ENCODE measurements at regions of chr15 and their contacts with region 1.

Region 1: GRCh38 chr15:100879464-100880138 is at the start of gene ALDH1A3:
- DNase-seq: no peak
- H3K4me3 ChIP-seq: peak within 1 kb of the TSS; percentile 50
- CTCF ChIP-seq: no peak

Region 2: GRCh38 chr15:100671858-100672543 is 207.6 kb before region 1 on chr15:
- CTCF ChIA-PET with region 1: interaction called, 21 read pairs
- POLR2A ChIA-PET with region 1: no interaction called
- DNase-seq: no peak
- H3K4me3 ChIP-seq: no peak overlapping the region
- CTCF ChIP-seq: peak; percentile 64

Region 3: GRCh38 chr15:100940767-100941379 is 61.3 kb after region 1 on chr15:
- CTCF ChIA-PET with region 1: no interaction called
- POLR2A ChIA-PET with region 1: no interaction called
- DNase-seq: no peak
- H3K4me3 ChIP-seq: no peak overlapping the region
- CTCF ChIP-seq: no peak

Region 4: DNA sequence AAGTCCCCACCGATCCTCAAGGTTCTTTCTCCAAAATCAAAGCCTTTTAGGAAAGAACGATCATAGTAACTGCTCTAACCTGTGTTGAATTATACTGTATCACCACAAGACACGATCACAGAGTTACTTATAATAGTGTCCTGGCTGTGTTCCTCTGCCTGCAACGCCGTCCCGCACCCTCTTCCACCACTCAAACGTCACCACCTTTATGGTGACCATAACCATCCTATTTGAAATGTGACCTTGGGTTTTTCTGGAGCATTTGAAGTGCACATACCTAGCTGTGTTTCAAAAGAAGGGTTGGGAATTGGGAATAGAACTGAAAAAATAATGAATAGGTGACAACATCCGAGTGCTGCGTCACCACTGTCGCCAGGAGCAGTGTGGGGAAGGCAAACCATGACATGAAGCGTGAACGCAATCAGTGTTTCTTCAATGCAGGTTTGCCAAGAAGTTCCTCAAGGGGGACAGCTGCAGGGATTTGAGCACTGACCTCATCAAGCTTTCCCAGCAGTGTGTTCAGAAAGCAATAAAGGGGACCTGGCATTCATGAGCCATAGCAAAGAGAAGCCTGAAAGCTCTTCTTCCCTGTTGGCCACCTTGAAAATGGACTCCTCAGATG is 398.5 kb after region 1 on chr15:
- CTCF ChIA-PET with region 1: no interaction called
- POLR2A ChIA-PET with region 1: no interaction called
- DNase-seq: no peak
- H3K4me3 ChIP-seq: peak overlapping the region; percentile 59
- CTCF ChIP-seq: no peak

Measured in AG04449 (cell line).